ENCODE measurements at regions of chr2 and their contacts with region 1.

Region 1: DNA sequence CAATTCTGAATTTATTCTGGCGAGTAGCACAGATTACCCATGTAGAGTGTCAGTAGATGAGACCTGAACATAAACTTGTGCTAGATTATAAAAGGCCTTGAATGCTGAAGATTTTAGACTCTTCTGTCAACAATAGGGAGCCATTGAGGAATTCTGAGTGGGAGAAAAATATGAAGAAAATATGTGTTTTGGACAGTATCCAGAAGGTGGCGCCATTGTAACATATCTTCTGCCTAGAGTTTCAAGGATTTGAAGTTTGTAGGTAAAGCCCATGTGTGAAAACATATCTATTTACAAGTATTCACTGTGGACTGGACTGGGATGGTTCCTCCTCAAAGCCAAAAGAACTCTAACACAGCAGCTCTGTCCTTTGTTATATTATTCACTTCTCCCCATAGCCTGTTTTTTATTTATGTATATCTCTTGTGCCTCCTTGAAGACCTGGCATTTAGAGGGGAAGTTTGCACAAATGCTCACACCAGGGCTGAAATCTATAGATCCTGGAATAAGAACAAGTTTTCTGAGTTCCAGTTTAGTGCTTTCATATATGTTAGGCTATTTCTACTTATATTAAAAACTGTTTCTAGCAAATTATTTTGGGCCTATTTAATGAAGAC is 124.9 kb downstream of the RDH14 start:
- DNase-seq: peak in 1 of 2 donors; percentile 35
- ATAC-seq: peak in 3 of 8 donors; percentile 27 to 57 (median 49)
- H3K4me3 ChIP-seq: no peak overlapping the region
- H3K27ac ChIP-seq: no peak overlapping the region
- H3K4me1 ChIP-seq: peaks cover 0 to 13% (median 4%) of the 10 kb centered on the region in 9 donors
- H3K27me3 ChIP-seq: no peaks in the 10 kb centered on the region
- CTCF ChIP-seq: peak; percentile 21 to 65 (median 59)

Region 2: DNA sequence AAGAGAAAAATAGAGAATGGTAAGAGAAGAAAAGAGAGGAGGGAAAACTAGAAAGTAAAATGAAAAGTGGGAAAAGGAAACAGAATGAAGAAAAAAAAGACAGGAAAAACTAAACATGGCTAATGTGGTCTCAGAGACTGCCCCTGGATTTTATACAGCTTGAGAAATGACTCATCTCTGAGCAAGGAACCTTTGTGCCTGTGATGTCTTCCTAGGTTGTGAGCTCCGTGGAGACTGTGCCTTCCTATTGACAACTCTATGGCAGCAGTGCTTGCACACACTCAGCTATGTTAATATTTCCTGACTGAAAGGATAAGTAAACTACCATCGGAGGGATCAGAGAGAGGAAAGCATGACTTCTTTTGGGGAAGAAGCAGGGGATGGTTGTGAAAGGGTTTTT is 78.9 kb before region 1 on chr2:
- intact Hi-C with region 1: no loop called
- DNase-seq: no peak
- ATAC-seq: no peak
- H3K4me3 ChIP-seq: no peak overlapping the region
- H3K27ac ChIP-seq: no peak overlapping the region
- H3K4me1 ChIP-seq: no peaks in the 10 kb centered on the region
- H3K27me3 ChIP-seq: no peaks in the 10 kb centered on the region
- CTCF ChIP-seq: no peak

Region 3: GRCh38 chr2:18455236-18455862 is 19.8 kb after region 1 on chr2:
- intact Hi-C with region 1: no loop called
- DNase-seq: no peak
- ATAC-seq: peak in 7 of 8 donors; percentile 30 to 68 (median 42)
- H3K4me3 ChIP-seq: no peak overlapping the region
- H3K27ac ChIP-seq: peak overlapping the region in 6 of 10 donors; percentile 15 to 52 (median 31)
- H3K4me1 ChIP-seq: peaks cover 0 to 16% (median 5%) of the 10 kb centered on the region in 9 donors
- H3K27me3 ChIP-seq: no peaks in the 10 kb centered on the region
- CTCF ChIP-seq: peak in 6 of 9 donors; percentile 13 to 47 (median 25)

Region 4: GRCh38 chr2:18514526-18515461 is 79.3 kb after region 1 on chr2:
- intact Hi-C with region 1: loop called in 4 of 10 experiments (anchors 5 to 10 kb)
- DNase-seq: no peak
- ATAC-seq: peak in 1 of 8 donors; percentile 32
- H3K4me3 ChIP-seq: no peak overlapping the region
- H3K27ac ChIP-seq: no peak overlapping the region
- H3K4me1 ChIP-seq: peaks cover 0 to 30% (median 12%) of the 10 kb centered on the region in 9 donors
- H3K27me3 ChIP-seq: no peaks in the 10 kb centered on the region
- CTCF ChIP-seq: no peak

Region 5: DNA sequence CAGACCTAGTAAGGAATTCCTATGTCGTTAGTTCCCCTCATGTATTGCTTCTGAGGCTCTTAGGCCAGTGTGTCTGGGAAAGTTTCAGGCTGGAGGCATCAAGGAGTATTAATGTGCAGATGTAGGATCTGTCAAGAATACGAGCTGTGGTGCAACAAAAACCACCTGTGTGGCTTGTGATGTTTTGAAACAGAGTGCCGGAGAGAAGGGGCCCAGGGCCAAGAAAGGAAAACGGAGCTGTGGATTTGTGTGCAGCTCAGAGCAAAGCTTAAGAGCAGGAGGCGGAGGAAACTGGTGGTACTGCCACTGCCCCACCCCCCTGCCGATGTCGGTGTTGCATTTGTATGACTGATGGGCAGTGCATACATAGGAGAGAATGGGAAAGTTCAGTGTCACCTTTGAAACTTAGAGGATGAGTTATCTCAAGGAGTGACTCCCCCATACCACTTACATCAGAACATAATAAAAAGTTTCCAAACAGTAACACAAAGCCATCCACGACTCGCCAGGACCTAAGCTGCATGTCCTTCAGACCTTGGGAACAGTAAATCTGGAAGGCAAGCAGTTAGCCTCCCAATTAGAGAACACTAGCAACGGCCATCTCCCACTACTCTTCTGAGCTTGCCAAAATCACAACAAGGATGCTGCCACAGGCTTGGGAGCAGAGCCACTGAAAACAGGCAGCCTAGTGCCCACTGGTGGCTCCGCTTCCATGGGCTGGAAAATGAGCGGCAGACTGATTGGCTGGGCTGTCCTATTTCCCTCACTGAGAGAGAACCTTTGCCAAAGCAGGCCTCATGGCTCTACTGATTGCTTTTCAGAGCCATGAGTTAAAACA is 306.6 kb after region 1 on chr2:
- intact Hi-C with region 1: loop called in 4 of 10 experiments (anchors 5 to 10 kb)
- DNase-seq: peak; percentile 15 to 36
- ATAC-seq: peak; percentile 61 to 88 (median 81)
- H3K4me3 ChIP-seq: no peak overlapping the region
- H3K27ac ChIP-seq: peak overlapping the region in 6 of 10 donors; percentile 9 to 39 (median 26)
- H3K4me1 ChIP-seq: peaks cover 0 to 20% (median 4%) of the 10 kb centered on the region in 9 donors
- H3K27me3 ChIP-seq: no peaks in the 10 kb centered on the region
- CTCF ChIP-seq: peak in 7 of 9 donors; percentile 15 to 55 (median 39)

Region 6: GRCh38 chr2:18749912-18750526 is 314.5 kb after region 1 on chr2:
- intact Hi-C with region 1: loop called in 3 of 10 experiments (anchors 10 kb)
- DNase-seq: peak in 1 of 2 donors; percentile 67
- ATAC-seq: peak in 2 of 8 donors; percentile 37 to 38
- H3K4me3 ChIP-seq: no peak overlapping the region
- H3K27ac ChIP-seq: no peak overlapping the region
- H3K4me1 ChIP-seq: peaks cover 0 to 15% (median 0%) of the 10 kb centered on the region in 9 donors
- H3K27me3 ChIP-seq: no peaks in the 10 kb centered on the region
- CTCF ChIP-seq: peak; percentile 55 to 87 (median 80)

Region 7: GRCh38 chr2:18987592-18988073 is 552.1 kb after region 1 on chr2:
- intact Hi-C with region 1: loop called in 1 of 10 experiments (anchors 10 kb)
- DNase-seq: peak; percentile 29 to 81
- ATAC-seq: peak in 5 of 8 donors; percentile 58 to 68 (median 66)
- H3K4me3 ChIP-seq: no peak overlapping the region
- H3K27ac ChIP-seq: no peak overlapping the region
- H3K4me1 ChIP-seq: peaks cover 0 to 31% (median 17%) of the 10 kb centered on the region in 9 donors
- H3K27me3 ChIP-seq: no peaks in the 10 kb centered on the region
- CTCF ChIP-seq: peak in 8 of 9 donors; percentile 7 to 59 (median 34)

Measured in heart right ventricle (tissue), 16 donors.